Tibial artery (tissue), 4 donors: ENCODE measurements at regions of chr1 and their contacts with region 1.

Region 1: DNA sequence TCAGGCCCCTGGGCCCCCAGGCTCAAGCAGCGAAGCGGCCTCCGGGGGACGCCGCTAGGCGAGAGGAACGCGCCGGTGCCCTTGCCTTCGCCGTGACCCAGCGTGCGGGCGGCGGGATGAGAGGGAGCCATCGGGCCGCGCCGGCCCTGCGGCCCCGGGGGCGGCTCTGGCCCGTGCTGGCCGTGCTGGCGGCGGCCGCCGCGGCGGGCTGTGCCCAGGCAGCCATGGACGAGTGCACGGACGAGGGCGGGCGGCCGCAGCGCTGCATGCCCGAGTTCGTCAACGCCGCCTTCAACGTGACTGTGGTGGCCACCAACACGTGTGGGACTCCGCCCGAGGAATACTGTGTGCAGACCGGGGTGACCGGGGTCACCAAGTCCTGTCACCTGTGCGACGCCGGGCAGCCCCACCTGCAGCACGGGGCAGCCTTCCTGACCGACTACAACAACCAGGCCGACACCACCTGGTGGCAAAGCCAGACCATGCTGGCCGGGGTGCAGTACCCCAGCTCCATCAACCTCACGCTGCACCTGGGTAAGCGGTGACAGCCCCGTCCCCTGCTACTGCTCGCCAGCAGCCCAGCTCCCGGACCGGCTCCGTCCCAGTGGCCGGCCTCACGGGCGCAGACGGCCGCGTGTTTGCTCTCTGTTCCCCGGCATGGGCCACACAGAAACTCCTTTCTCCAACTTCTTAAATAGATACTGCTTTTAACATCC is 539 bp downstream of the LAMC1 start:
- DNase-seq: peak; percentile 57 to 78
- H3K4me3 ChIP-seq: peak overlapping the region; percentile 77 to 86
- H3K27ac ChIP-seq: peak overlapping the region; percentile 97 to 99
- H3K4me1 ChIP-seq: peaks cover 0 to 50% (median 28%) of the 10 kb centered on the region in 4 donors
- H3K27me3 ChIP-seq: no peaks in the 10 kb centered on the region
- CTCF ChIP-seq: peak; percentile 39 to 42

Region 2: DNA sequence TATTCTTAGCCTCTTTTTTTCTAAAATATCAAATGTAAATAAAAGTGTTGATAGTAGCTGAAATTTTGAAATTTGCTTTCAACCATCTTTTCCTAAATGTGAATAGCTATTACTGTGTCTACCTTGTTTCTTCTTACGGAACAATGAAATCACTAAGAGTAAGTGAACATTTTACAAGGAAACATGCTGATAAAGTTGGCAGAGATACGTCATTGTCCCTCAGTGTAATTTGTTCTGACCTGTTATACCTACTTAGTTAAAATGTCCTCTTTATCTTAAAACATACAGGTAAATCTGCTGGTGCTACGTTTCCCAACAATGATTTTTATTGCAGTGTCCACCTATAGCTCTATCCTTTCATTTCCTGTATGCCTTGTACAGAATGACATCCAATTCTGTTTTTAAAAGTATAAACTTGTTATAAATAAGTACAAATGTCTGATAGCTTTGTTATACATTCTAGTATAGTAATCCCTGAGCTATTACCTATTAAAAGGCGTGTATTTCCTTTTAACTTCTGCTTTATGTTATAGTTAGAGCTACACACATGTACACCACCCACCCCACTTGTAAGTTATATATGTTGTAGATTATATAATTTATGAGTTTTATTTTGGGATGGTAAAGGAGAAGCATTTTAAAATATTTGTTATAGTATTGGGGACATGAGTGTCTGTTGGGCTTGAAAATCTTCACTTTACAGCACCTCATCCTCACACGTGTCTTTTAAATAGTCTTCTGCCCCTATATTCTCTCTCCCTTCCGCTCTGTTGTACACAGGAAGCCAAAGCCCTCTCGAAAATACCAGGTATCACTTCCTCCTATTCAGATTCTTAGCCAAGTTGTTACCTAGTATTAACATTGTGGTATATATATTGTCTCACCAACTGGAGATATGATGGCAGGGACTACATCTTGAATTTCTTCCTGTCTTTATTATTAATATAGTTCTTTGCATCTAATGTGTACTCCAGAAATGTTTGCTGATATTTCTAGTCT is 24.6 kb after region 1 on chr1:
- intact Hi-C with region 1: no loop called
- DNase-seq: no peak
- H3K4me3 ChIP-seq: no peak overlapping the region
- H3K27ac ChIP-seq: peak overlapping the region in 1 of 2 donors; percentile 50
- H3K4me1 ChIP-seq: peaks cover 0 to 91% (median 30%) of the 10 kb centered on the region in 4 donors
- H3K27me3 ChIP-seq: no peaks in the 10 kb centered on the region
- CTCF ChIP-seq: no peak

Region 3: DNA sequence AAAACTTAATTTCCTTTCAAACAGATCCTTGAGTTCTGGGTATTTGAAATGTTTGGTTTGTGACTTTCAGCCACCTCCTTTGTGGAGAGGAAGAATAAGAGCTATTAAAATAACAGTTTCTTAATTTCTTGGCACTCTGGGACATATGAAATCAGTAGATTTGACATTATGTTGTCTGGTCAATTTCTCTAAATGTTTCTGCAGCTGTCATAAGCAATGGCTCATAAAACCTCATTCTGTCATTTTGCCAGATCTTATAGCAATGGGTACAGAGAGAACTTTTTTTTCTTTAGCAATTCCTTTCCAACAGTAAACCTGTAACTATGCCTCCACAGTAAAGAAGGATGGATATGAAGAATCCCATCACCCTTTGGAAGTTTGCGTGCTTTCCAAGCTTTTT is 52.1 kb after region 1 on chr1:
- intact Hi-C with region 1: loop called (anchors 5 kb)
- DNase-seq: no peak
- H3K4me3 ChIP-seq: no peak overlapping the region
- H3K27ac ChIP-seq: peak overlapping the region in 1 of 2 donors; percentile 17
- H3K4me1 ChIP-seq: peaks cover 0 to 100% (median 71%) of the 10 kb centered on the region in 4 donors
- H3K27me3 ChIP-seq: no peaks in the 10 kb centered on the region
- CTCF ChIP-seq: no peak

Region 4: GRCh38 chr1:183227963-183228649 is 204.3 kb after region 1 on chr1:
- intact Hi-C with region 1: loop called (anchors 10 kb)
- DNase-seq: peak in 1 of 2 donors; percentile 43
- H3K4me3 ChIP-seq: no peak overlapping the region
- H3K27ac ChIP-seq: no peak overlapping the region
- H3K4me1 ChIP-seq: no peaks in the 10 kb centered on the region
- H3K27me3 ChIP-seq: no peaks in the 10 kb centered on the region
- CTCF ChIP-seq: peak; percentile 66 to 75